ENCODE measurements at regions of chr17 and their contacts with region 1.

Region 1: DNA sequence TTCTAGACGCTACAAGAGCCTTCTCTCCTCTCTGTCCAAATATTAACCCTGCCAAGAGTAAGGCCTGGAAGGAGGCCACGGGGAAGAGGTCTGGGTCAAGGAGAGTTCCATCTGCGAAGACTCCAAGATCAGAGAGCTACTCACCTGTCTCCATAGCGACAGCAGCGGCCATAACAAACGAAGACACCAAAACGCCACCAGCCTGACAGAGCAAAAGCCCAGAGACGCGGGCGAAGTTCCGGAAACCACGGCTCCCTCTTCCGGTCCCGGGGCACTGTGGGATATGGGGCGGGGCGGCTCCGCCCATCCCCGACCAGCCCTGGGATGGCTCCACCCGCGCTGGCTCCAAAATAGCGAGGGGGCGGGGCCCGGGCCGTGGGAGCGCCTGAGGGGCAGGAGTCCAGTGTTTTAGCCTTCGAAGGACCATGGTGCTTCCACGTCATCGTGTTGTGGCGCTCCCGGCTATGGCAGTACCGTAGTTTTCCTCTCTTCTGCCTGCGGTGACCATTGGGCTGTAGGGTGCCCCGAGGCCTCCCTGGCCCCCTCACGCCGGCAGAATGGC is at the starts of genes C17orf100 and MED31:
- DNase-seq: peak; percentile 96
- H3K4me3 Mint-ChIP-seq: peak within 1 kb of the TSS; percentile 96
- H3K27ac Mint-ChIP-seq: peak within 1 kb of the TSS; percentile 96
- H3K4me1 Mint-ChIP-seq: peaks cover 63% of the 10 kb centered on the region
- H3K27me3 Mint-ChIP-seq: no peaks in the 10 kb centered on the region
- total RNA-seq, gene C17orf100: 0.99 to 1.2 TPM
- total RNA-seq, gene MED31: 21.7 to 22.5 TPM

Region 2: GRCh38 chr17:6079155-6079888 is 572.1 kb before region 1 on chr17:
- CTCF ChIA-PET with region 1: no interaction called
- intact Hi-C with region 1: no loop called
- DNase-seq: no peak
- H3K4me3 Mint-ChIP-seq: no peak overlapping the region
- H3K27ac Mint-ChIP-seq: no peak overlapping the region
- H3K4me1 Mint-ChIP-seq: no peaks in the 10 kb centered on the region
- H3K27me3 Mint-ChIP-seq: peaks cover 2% of the 10 kb centered on the region

Region 3: DNA sequence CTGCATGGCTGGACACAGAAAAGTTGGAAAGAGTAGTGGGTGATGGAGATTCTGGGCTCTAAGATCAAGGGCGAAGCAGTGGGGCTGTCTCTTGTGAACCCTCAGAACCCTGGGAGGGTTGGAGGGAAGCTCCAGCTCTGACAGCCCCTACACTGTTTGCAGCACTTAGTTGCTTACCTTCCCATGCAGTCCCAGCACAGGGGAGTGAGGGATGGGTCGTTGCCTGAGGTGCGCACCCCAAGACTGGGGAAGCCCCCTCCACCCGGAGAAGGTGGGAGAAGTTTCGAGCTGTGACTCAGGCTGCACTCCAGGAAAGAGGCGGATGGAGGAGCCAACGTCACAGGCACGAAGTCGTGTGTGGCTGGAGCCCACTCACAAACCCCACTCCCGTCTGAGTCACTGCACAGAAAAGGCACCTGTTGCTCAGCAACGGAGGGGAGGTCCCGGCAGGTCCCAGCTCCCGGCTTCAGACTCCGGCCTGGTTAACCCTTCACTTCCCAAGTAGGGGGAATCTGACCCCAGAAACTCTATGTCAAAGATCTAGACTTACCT is 276.6 kb before region 1 on chr17:
- CTCF ChIA-PET with region 1: no interaction called
- intact Hi-C with region 1: loop called (anchors 5 kb)
- DNase-seq: peak; percentile 92
- H3K4me3 Mint-ChIP-seq: peak overlapping the region; percentile 9
- H3K27ac Mint-ChIP-seq: peak overlapping the region; percentile 86
- H3K4me1 Mint-ChIP-seq: peaks cover 21% of the 10 kb centered on the region
- H3K27me3 Mint-ChIP-seq: peaks cover 23% of the 10 kb centered on the region

Region 4: GRCh38 chr17:6640536-6641373 is 10.7 kb before region 1 on chr17 and contains the starts of genes KIAA0753 and TXNDC17:
- CTCF ChIA-PET with region 1: interaction called, 3 read pairs
- intact Hi-C with region 1: loop called (anchors 1 kb)
- DNase-seq: peak; percentile 93
- H3K4me3 Mint-ChIP-seq: peak within 1 kb of the TSS; percentile 81
- H3K27ac Mint-ChIP-seq: peak within 1 kb of the TSS; percentile 97
- H3K4me1 Mint-ChIP-seq: peaks cover 51% of the 10 kb centered on the region
- H3K27me3 Mint-ChIP-seq: no peaks in the 10 kb centered on the region
- total RNA-seq, gene KIAA0753: 7.7 to 8.1 TPM
- total RNA-seq, gene TXNDC17: 71.4 to 85.8 TPM

Region 5: DNA sequence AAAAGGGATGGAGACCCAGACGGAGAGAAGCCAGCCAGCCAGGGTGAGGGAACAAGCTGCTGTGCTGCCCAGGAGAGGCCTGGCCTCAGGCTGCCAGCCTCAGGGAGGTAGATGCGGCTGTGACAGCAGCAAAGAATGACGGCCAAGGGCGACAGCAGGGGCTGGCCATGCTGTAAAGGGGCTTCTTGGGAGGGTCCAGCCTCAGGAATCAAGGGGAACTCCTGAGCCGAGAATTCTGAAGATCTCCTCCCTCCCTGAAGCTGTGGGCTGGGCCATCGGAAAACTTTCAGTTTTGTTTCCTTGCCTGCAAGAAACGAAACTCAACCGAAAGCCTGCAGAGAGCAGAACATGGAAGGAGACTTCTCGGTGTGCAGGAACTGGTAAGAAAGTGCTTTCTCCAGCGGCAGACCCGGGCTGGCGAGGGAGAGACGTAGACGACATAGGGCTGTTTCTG is 104.3 kb after region 1 on chr17 and contains the start of gene XAF1:
- CTCF ChIA-PET with region 1: no interaction called
- intact Hi-C with region 1: loop called (anchors 5 kb)
- DNase-seq: peak; percentile 61
- H3K4me3 Mint-ChIP-seq: peak within 1 kb of the TSS; percentile 93
- H3K27ac Mint-ChIP-seq: peak within 1 kb of the TSS; percentile 84
- H3K4me1 Mint-ChIP-seq: peaks cover 53% of the 10 kb centered on the region
- H3K27me3 Mint-ChIP-seq: no peaks in the 10 kb centered on the region
- total RNA-seq, gene XAF1: 15.0 to 19.0 TPM

Region 6: DNA sequence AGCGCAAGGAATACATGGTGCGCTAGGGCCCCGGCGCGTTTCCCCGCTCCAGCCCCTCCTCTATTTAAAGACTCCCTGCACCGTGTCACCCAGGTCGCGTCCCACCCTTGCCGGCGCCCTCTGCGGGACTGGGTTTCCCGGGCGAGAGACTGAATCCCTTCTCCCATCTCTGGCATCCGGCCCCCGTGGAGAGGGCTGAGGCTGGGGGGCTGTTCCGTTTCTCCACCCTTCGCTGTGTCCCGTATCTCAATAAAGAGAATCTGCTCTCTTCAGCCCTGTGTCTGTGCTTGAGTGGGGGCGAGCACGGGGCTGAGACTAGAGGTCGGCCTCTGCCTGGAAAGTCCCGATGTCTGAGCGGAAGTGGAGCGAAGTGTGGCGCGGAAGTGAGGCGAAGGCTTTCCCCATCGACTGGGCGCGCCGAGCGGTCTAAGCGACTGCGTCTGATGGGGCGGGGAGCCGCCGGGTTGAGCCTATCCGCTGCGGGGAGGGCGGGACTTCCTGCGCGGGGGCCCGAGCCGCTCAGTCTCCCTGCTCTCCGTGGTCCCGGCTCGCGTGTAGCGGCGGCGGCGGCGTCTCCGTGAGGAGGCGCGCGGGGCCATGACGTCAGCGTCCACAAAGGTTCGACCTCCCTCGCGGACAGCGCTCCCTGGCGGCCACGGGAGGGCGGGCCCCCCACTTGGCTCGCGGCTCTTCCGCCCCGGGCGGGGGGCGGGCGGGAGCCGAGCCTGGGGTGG is 363.0 kb after region 1 on chr17:
- CTCF ChIA-PET with region 1: no interaction called
- intact Hi-C with region 1: loop called (anchors 2 kb)
- DNase-seq: peak; percentile 98
- H3K4me3 Mint-ChIP-seq: peak overlapping the region; percentile 93
- H3K27ac Mint-ChIP-seq: peak overlapping the region; percentile 100
- H3K4me1 Mint-ChIP-seq: peaks cover 50% of the 10 kb centered on the region
- H3K27me3 Mint-ChIP-seq: no peaks in the 10 kb centered on the region